Activated CD8-positive, alpha-beta T cell treated with anti-CD3 and anti-CD28 coated beads for 36 hours (primary cell): ENCODE measurements at regions of chr11 and their contacts with region 1.

Region 1: GRCh38 chr11:75406338-75406777 is 7.0 kb downstream of the RPS3 start:
- DNase-seq: no peak
- ATAC-seq: no peak
- H3K4me3 Mint-ChIP-seq: no peak overlapping the region
- H3K27ac Mint-ChIP-seq: peak overlapping the region; percentile 70
- H3K4me1 Mint-ChIP-seq: peaks cover 49% of the 10 kb centered on the region
- H3K27me3 Mint-ChIP-seq: no peaks in the 10 kb centered on the region
- CTCF ChIP-seq: no peak

Region 2: GRCh38 chr11:75223954-75224643 is 182.3 kb before region 1 on chr11:
- CTCF ChIA-PET with region 1: no interaction called
- POLR2A ChIA-PET with region 1: no interaction called
- intact Hi-C with region 1: no loop called
- DNase-seq: no peak
- ATAC-seq: no peak
- H3K4me3 Mint-ChIP-seq: no peak overlapping the region
- H3K27ac Mint-ChIP-seq: no peak overlapping the region
- H3K4me1 Mint-ChIP-seq: no peaks in the 10 kb centered on the region
- H3K27me3 Mint-ChIP-seq: no peaks in the 10 kb centered on the region
- CTCF ChIP-seq: no peak

Region 3: GRCh38 chr11:75394085-75394840 is 12.1 kb before region 1 on chr11:
- CTCF ChIA-PET with region 1: interaction called, 14 read pairs
- POLR2A ChIA-PET with region 1: interaction called, 26 read pairs
- intact Hi-C with region 1: no loop called
- DNase-seq: no peak
- ATAC-seq: peak; percentile 68
- H3K4me3 Mint-ChIP-seq: no peak overlapping the region
- H3K27ac Mint-ChIP-seq: no peak overlapping the region
- H3K4me1 Mint-ChIP-seq: peaks cover 14% of the 10 kb centered on the region
- H3K27me3 Mint-ChIP-seq: no peaks in the 10 kb centered on the region
- CTCF ChIP-seq: no peak

Region 4: DNA sequence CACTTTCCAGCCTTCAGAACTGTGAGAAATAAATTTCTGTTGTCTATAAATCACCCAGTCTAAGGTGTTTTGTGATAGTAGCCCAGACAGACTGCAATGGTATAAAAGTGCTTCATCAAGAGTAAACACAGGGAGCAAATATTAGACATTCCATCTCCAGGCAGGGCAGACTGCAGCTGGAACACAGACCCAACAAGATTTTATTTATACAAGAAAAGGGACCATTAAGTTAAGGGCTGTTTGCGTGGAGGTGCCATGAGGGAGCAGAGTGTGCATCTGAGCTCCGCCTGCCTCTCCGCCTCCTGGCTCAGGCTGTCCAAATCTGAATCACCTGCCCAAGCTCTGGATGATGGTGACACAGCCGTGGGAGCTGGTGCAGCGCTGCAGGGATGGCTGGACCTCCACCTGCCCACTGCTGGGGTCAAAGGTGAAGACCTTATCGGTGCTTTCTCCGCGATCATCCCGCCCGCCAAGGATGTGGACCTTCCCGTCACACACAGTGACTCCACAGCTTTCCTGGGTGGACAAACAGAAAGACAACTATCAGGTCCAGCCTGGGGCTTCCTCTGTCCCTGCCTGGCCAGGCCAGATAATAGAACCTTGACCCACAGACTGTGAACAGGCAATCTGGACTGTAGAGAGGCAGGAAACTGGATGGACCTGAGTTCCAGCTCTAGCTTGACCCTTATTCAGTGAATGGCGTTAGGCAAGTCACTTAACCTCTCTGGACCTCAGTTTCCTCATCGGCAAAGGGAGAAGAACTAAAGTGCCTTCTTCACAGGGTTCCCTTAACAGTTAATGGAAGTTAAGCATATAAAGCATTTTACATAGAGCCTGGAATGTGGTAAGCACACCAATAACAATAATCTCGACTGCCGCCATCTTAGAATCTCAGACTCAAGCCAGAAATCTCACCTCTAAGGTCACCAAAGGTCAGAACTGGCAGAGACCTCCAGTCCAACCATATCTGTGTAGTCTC is 16.2 kb after region 1 on chr11:
- CTCF ChIA-PET with region 1: interaction called, 17 read pairs
- POLR2A ChIA-PET with region 1: interaction called, 32 read pairs
- intact Hi-C with region 1: no loop called
- DNase-seq: no peak
- ATAC-seq: no peak
- H3K4me3 Mint-ChIP-seq: no peak overlapping the region
- H3K27ac Mint-ChIP-seq: no peak overlapping the region
- H3K4me1 Mint-ChIP-seq: no peaks in the 10 kb centered on the region
- H3K27me3 Mint-ChIP-seq: no peaks in the 10 kb centered on the region
- CTCF ChIP-seq: no peak

Region 5: DNA sequence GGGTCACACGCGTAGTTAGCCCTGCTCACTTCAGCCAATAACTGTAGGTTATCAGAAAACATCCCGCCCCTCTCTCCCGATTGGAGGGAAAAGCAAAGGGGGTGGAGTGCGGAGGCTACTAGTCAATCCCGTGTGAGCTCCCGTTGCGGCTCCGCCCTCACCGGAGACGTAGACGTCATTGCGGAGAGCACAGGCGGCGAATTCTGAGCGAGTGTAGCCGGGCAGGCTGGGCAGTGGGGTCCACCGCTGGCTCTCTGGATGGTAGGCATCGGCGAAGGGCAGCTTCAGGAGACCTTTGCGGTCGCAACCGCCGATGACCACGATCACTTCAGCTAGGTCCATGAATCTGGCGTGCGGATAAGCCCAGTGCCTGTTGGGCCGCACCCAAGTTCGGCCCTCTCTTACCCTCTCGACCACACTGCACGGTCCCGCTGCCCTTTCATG is 21.9 kb after region 1 on chr11:
- CTCF ChIA-PET with region 1: interaction called, 9 read pairs
- POLR2A ChIA-PET with region 1: interaction called, 32 read pairs
- intact Hi-C with region 1: no loop called
- DNase-seq: peak; percentile 68
- ATAC-seq: peak; percentile 48
- H3K4me3 Mint-ChIP-seq: peak overlapping the region; percentile 21
- H3K27ac Mint-ChIP-seq: no peak overlapping the region
- H3K4me1 Mint-ChIP-seq: peaks cover 13% of the 10 kb centered on the region
- H3K27me3 Mint-ChIP-seq: peaks cover 38% of the 10 kb centered on the region
- CTCF ChIP-seq: no peak

Region 6: GRCh38 chr11:75516841-75517240 is 110.5 kb after region 1 on chr11:
- CTCF ChIA-PET with region 1: no interaction called
- POLR2A ChIA-PET with region 1: no interaction called
- intact Hi-C with region 1: no loop called
- DNase-seq: no peak
- ATAC-seq: no peak
- H3K4me3 Mint-ChIP-seq: no peak overlapping the region
- H3K27ac Mint-ChIP-seq: no peak overlapping the region
- H3K4me1 Mint-ChIP-seq: peaks cover 9% of the 10 kb centered on the region
- H3K27me3 Mint-ChIP-seq: no peaks in the 10 kb centered on the region
- CTCF ChIP-seq: no peak